Activated T-helper 1 cell treated with anti-CD3 and anti-CD28 coated beads, Interleukin-12 subunit alpha, Interleukin-12 subunit beta, Interleukin-2, Interleukin-4 antibody, amounts not matched to agents 30 ng/mL and 10 ng/mL and 1 ng/mL, durations not matched to agents 14 hours and 24 hours and 36 hours (primary cell): ENCODE measurements at regions of chr5 and their contacts with region 1.

Region 1: DNA sequence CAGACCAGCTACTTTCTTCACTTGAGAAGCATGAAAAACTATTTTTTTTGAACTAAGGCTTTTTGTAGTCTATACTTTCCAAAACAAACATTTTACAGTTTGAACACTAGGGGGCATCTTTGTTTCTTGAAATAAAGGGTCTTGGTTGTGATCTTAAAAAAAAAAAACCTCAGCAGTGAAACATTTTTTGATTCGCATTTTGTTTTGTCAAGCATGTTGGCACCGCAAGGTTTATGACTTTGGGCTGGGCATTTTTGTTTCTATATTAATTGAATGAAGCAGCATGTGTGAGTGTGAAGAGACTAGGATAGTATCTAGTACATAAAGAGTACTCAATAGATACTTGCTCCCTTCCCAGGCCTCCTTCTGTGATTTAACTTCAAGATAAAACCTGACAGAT is 31.6 kb upstream of the ACOT12 start:
- DNase-seq: no peak
- H3K4me3 Mint-ChIP-seq: no peak overlapping the region
- H3K27ac Mint-ChIP-seq: no peak overlapping the region
- H3K4me1 Mint-ChIP-seq: peaks cover 34% of the 10 kb centered on the region
- H3K27me3 Mint-ChIP-seq: no peaks in the 10 kb centered on the region

Region 2: DNA sequence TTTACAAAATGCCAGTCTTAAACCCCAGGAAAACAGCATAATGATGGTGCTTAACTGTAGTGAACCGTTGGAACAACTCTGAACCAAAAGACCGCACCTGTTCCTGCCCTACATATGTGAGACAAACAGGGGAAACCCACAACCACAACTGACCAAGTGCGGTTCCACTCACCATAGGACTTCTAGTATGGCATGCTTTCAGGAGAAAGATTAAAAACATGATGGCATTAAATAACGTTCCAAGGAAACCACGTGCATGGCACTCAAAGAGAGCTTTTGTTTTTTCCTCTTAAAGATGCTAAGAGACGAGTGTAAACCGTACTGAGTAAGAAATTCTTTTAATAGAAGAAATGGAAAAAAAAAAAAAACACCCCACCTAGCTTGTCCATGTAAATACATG is 205.6 kb after region 1 on chr5:
- intact Hi-C with region 1: loop called (anchors 10 kb)
- DNase-seq: peak; percentile 16
- H3K4me3 Mint-ChIP-seq: peak overlapping the region; percentile 15
- H3K27ac Mint-ChIP-seq: peak overlapping the region; percentile 13
- H3K4me1 Mint-ChIP-seq: peaks cover 7% of the 10 kb centered on the region
- H3K27me3 Mint-ChIP-seq: no peaks in the 10 kb centered on the region

Region 3: DNA sequence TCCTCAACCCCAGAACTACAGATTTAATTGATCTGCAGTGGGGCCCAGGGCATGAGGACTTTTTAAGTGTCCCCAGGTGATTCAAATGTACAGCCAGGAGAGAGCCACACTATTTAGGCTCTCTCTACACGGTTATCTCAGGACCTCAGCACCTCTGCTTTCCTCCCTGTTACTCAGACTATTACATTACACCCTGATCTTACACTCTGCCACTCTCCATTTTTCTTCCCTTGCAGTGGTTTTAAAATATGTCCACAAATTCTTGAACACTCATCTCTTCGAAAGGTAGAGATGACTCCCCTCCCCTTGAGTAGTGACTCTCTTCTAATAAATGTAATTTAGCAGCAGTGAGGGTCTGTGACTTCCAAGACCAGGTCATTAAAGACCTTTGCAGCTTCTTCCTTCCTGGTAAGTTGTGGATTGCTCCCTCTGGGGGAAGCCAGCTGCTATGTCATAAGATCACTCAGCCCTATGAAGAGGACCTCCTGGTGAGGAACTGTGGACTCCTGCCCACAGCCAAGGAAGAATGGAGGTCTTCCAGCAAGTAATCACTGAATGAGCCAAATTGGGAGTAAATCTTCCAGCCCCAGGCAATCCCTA is 412.8 kb after region 1 on chr5:
- intact Hi-C with region 1: loop called (anchors 1 kb)
- DNase-seq: no peak
- H3K4me3 Mint-ChIP-seq: no peak overlapping the region
- H3K27ac Mint-ChIP-seq: no peak overlapping the region
- H3K4me1 Mint-ChIP-seq: peaks cover 5% of the 10 kb centered on the region
- H3K27me3 Mint-ChIP-seq: peaks cover 5% of the 10 kb centered on the region

Region 4: DNA sequence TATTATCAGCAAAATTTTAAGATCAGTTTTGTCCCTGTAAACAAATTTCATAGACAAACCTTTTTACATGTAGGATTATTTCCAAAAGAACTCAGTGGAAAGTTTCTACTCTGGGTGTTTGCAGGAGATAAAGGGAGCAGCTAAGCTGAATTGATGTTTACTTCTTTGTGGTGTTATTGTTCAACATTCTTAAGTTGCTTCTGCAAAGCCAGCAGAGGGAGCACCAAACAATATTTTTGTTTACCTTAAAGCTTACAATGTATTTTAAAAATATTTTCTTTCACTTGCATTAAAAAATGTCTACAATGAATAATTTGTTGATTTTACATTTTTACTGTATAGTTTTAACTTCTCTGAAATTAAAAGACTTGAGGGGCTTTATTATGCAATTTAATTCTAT is 681.7 kb after region 1 on chr5:
- intact Hi-C with region 1: loop called (anchors 10 kb)
- DNase-seq: no peak
- H3K4me3 Mint-ChIP-seq: no peak overlapping the region
- H3K27ac Mint-ChIP-seq: no peak overlapping the region
- H3K4me1 Mint-ChIP-seq: peaks cover 7% of the 10 kb centered on the region
- H3K27me3 Mint-ChIP-seq: no peaks in the 10 kb centered on the region

Region 5: GRCh38 chr5:82165740-82166530 is 740.4 kb after region 1 on chr5:
- intact Hi-C with region 1: loop called (anchors 1 kb)
- DNase-seq: no peak
- H3K4me3 Mint-ChIP-seq: no peak overlapping the region
- H3K27ac Mint-ChIP-seq: no peak overlapping the region
- H3K4me1 Mint-ChIP-seq: no peaks in the 10 kb centered on the region
- H3K27me3 Mint-ChIP-seq: no peaks in the 10 kb centered on the region

Region 6: GRCh38 chr5:82225525-82226172 is 800.1 kb after region 1 on chr5:
- intact Hi-C with region 1: loop called (anchors 1 kb)
- DNase-seq: peak; percentile 55
- H3K4me3 Mint-ChIP-seq: no peak overlapping the region
- H3K27ac Mint-ChIP-seq: no peak overlapping the region
- H3K4me1 Mint-ChIP-seq: no peaks in the 10 kb centered on the region
- H3K27me3 Mint-ChIP-seq: no peaks in the 10 kb centered on the region

Region 7: GRCh38 chr5:83076742-83077661 is 1651.4 kb after region 1 on chr5 and contains the starts of genes TMEM167A and XRCC4:
- intact Hi-C with region 1: loop called (anchors 10 kb)
- DNase-seq: peak; percentile 93
- H3K4me3 Mint-ChIP-seq: peak within 1 kb of the TSS; percentile 100
- H3K27ac Mint-ChIP-seq: peak within 1 kb of the TSS; percentile 99
- H3K4me1 Mint-ChIP-seq: peaks cover 43% of the 10 kb centered on the region
- H3K27me3 Mint-ChIP-seq: no peaks in the 10 kb centered on the region
- total RNA-seq, gene TMEM167A: 84.6 and 96.2 TPM in 2 replicates
- total RNA-seq, gene XRCC4: 10.2 and 11.2 TPM in 2 replicates